Common myeloid progenitor, CD34-positive (primary cell): ENCODE measurements at regions of chr1 and their contacts with region 1.

Region 1: GRCh38 chr1:202135221-202135721 is 9.3 kb downstream of the ARL8A start:
- DNase-seq: peak; percentile 51 to 76 (median 67)
- H3K4me3 ChIP-seq: no peak overlapping the region
- H3K27ac ChIP-seq: no peak overlapping the region
- H3K4me1 ChIP-seq: peaks cover 0 to 3% (median under 1%) of the 10 kb centered on the region in 4 experiments
- H3K27me3 ChIP-seq: no peaks in the 10 kb centered on the region

Region 2: GRCh38 chr1:202009326-202010179 is 125.7 kb before region 1 on chr1:
- CTCF ChIA-PET with region 1: interaction called, 16 read pairs
- POLR2A ChIA-PET with region 1: no interaction called
- DNase-seq: peak; percentile 56 to 73 (median 63)
- H3K4me3 ChIP-seq: no peak overlapping the region
- H3K27ac ChIP-seq: no peak overlapping the region
- H3K4me1 ChIP-seq: no peaks in the 10 kb centered on the region
- H3K27me3 ChIP-seq: no peaks in the 10 kb centered on the region

Region 3: GRCh38 chr1:202122639-202123335 is 12.5 kb before region 1 on chr1 and contains the start of gene GPR37L1:
- CTCF ChIA-PET with region 1: interaction called, 20 read pairs
- POLR2A ChIA-PET with region 1: no interaction called
- DNase-seq: no peak
- H3K4me3 ChIP-seq: no peak within 1 kb of the TSS
- H3K27ac ChIP-seq: no peak within 1 kb of the TSS
- H3K4me1 ChIP-seq: peaks cover 0 to 8% (median 6%) of the 10 kb centered on the region in 4 experiments
- H3K27me3 ChIP-seq: peaks cover 0 to 2% (median 0%) of the 10 kb centered on the region in 5 experiments